Activated T-helper 1 cell treated with anti-CD3 and anti-CD28 coated beads, Interleukin-12 subunit alpha, Interleukin-12 subunit beta, Interleukin-2, Interleukin-4 antibody, amounts not matched to agents 30 ng/mL and 10 ng/mL and 1 ng/mL, durations not matched to agents 14 hours and 24 hours and 36 hours (primary cell): ENCODE measurements at regions of chr12 and their contacts with region 1.

Region 1: GRCh38 chr12:48681738-48682532 is at the start of gene KANSL2:
- DNase-seq: peak; percentile 97
- H3K4me3 Mint-ChIP-seq: peak within 1 kb of the TSS; percentile 99
- H3K27ac Mint-ChIP-seq: peak within 1 kb of the TSS; percentile 96
- H3K4me1 Mint-ChIP-seq: peaks cover 44% of the 10 kb centered on the region
- H3K27me3 Mint-ChIP-seq: no peaks in the 10 kb centered on the region
- total RNA-seq, gene KANSL2: 65.3 and 66.4 TPM in 2 replicates

Region 2: GRCh38 chr12:48618541-48618940 is 63.4 kb before region 1 on chr12:
- intact Hi-C with region 1: no loop called
- DNase-seq: peak; percentile 71
- H3K4me3 Mint-ChIP-seq: no peak overlapping the region
- H3K27ac Mint-ChIP-seq: no peak overlapping the region
- H3K4me1 Mint-ChIP-seq: peaks cover 7% of the 10 kb centered on the region
- H3K27me3 Mint-ChIP-seq: peaks cover 23% of the 10 kb centered on the region

Region 3: GRCh38 chr12:48696626-48697025 is 14.7 kb after region 1 on chr12:
- intact Hi-C with region 1: loop called (anchors 2 kb)
- DNase-seq: no peak
- H3K4me3 Mint-ChIP-seq: no peak overlapping the region
- H3K27ac Mint-ChIP-seq: no peak overlapping the region
- H3K4me1 Mint-ChIP-seq: peaks cover 18% of the 10 kb centered on the region
- H3K27me3 Mint-ChIP-seq: no peaks in the 10 kb centered on the region

Region 4: DNA sequence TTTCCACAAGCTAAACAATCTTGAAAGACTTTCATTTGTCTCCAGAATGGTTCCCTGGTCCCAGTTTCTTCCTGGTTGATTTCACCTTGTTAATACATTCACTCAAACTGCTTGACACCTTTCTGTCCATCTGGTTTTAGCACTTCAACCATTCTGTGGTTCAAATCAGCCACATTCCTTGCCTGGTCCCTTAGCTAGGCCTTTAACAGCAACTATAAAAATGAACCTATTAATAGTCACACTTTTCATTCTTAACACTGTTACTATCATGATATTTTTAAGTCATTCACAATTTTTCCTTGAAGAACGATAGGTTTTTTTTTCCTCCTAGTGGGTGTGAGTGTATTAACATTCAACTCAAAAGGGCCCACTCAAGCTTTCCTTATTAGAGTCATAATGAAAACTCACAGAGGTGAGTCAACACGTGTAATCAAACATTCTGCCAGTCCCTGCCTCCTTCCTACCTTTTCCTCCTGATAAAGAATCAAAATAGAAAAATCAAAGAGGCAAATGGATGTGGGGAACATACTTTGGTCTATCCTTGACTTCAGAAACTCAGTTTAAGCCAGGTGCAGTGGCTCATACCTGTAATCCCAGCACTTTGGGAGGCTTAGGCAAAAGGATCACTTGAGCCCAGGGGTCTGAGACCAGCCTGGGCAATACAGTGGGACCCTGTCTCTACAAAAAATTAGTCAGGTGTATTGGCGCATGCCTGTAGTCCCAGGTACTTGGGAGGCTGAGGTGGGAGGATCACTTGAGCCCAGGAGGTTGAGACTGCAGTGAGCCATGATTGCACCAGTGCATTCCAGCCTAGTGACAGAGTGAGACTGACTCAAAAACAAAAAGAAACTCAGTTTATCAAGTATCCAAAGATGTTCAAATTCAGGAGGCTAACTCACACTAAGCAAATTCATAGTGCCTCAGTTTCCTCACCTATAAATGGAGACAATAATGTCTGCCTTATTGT is 69.1 kb after region 1 on chr12:
- intact Hi-C with region 1: loop called (anchors 2 kb)
- DNase-seq: no peak
- H3K4me3 Mint-ChIP-seq: no peak overlapping the region
- H3K27ac Mint-ChIP-seq: peak overlapping the region; percentile 14
- H3K4me1 Mint-ChIP-seq: peaks cover 15% of the 10 kb centered on the region
- H3K27me3 Mint-ChIP-seq: peaks cover 7% of the 10 kb centered on the region